ENCODE measurements at regions of chr14 and their contacts with region 1.

Region 1: GRCh38 chr14:89848165-89848564 is 106.4 kb downstream of the EFCAB11 start:
- DNase-seq: peak; percentile 71
- ATAC-seq: 0 out of 2 replicates have a peak, but pooled peaks have one; percentile 3
- H3K4me3 ChIP-seq: no peak overlapping the region
- H3K27ac ChIP-seq: no peak overlapping the region
- H3K4me1 ChIP-seq: peaks cover 16% of the 10 kb centered on the region
- H3K27me3 ChIP-seq: no peaks in the 10 kb centered on the region
- CTCF ChIP-seq: peak; percentile 70
- POLR2A ChIP-seq: no peak
- RAD21 ChIP-seq: peak; percentile 85

Region 2: DNA sequence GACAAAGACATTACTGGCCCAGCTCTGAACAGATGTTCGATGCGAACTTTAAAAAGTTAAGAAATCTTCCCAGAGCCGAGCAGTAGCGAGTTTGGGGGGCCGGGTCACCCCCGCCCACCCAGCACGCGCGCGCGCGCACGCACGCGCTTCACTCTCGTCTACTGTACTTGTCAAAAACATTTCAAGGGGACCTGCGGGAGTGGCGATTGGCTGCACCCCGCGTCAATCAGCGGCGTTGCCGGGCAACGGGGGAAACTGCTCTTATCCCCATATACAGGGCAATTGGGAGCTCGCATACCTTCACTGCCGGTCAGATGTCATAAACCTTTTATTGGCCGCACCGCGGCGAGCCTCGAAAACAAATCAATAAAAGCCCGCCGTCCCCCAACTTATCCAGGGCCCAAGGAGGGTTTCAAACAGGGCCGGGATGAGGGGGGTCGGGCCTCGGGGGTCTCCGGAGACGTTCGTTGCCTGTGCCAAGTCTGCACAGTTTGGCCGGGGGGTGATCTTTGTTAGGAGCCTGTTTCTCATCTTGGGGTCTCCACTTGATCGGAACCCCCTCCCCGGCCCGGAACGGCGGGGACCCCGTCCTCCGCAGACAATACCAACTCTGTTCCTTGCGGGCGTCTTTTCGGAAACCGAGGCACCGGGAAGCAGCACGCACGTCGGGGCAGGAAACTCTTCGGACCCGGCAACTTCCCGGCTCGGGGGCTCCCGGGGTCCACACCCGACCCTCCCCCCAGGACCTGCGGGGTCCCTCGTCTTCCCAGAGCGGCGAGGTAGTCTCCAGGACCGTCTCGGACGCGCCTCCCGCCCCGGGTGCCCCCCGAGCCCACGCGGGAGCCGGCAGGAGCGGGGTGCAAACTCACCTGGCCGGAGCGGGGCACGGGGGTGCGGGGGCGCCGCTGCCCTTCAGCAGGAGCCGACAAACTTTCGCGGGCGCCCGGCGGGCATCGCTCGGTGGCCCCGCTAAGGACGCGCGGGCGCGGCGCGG is 431.9 kb before region 1 on chr14:
- CTCF ChIA-PET with region 1: no interaction called
- POLR2A ChIA-PET with region 1: no interaction called
- dilution Hi-C with region 1: no loop called
- in situ Hi-C with region 1: no loop called
- intact Hi-C with region 1: loop called (anchors 5 kb)
- DNase-seq: peak; percentile 97
- ATAC-seq: peak; percentile 81
- H3K4me3 ChIP-seq: peak overlapping the region; percentile 62
- H3K27ac ChIP-seq: peak overlapping the region; percentile 60
- H3K4me1 ChIP-seq: peaks cover 12% of the 10 kb centered on the region
- H3K27me3 ChIP-seq: no peaks in the 10 kb centered on the region
- CTCF ChIP-seq: no peak
- POLR2A ChIP-seq: peak; percentile 69
- RAD21 ChIP-seq: no peak; the same call in 1 of the 2 replicates

Region 3: DNA sequence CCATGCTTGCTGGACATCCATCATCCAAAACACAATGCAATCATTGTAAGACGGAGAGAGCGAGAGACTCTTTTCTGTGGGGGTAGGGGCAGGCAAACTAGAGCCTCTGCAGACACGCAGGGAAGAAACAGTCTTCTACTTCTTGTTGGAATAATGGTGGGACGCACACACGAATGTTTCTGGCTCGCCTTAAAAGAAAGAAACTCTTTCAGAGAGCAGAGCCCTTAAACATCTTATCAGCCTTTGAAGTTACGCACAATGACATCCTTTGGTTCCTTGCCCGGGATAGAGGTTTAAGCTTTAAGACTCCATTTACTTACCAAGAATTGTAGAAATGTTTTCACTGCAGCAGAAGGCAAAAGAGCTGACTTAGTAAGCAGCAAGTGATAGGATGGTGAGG is 297.3 kb before region 1 on chr14:
- CTCF ChIA-PET with region 1: no interaction called
- POLR2A ChIA-PET with region 1: no interaction called
- dilution Hi-C with region 1: no loop called
- in situ Hi-C with region 1: no loop called
- intact Hi-C with region 1: no loop called
- DNase-seq: no peak
- ATAC-seq: no peak
- H3K4me3 ChIP-seq: no peak overlapping the region
- H3K27ac ChIP-seq: no peak overlapping the region
- H3K4me1 ChIP-seq: peaks cover 2% of the 10 kb centered on the region; the same call in 1 of the 2 replicates
- H3K27me3 ChIP-seq: no peaks in the 10 kb centered on the region
- CTCF ChIP-seq: no peak
- POLR2A ChIP-seq: no peak
- RAD21 ChIP-seq: no peak

Region 4: GRCh38 chr14:89618811-89619551 is 229.2 kb before region 1 on chr14:
- CTCF ChIA-PET with region 1: no interaction called
- POLR2A ChIA-PET with region 1: no interaction called
- dilution Hi-C with region 1: no loop called
- in situ Hi-C with region 1: no loop called
- intact Hi-C with region 1: loop called (anchors 5 kb)
- DNase-seq: peak; percentile 67
- ATAC-seq: peak; percentile 91
- H3K4me3 ChIP-seq: peak overlapping the region; percentile 78
- H3K27ac ChIP-seq: peak overlapping the region; percentile 87
- H3K4me1 ChIP-seq: peaks cover 12% of the 10 kb centered on the region
- H3K27me3 ChIP-seq: no peaks in the 10 kb centered on the region
- CTCF ChIP-seq: peak; percentile 4; the same call in 1 of the 2 replicates
- POLR2A ChIP-seq: peak; percentile 49; the same call in 1 of the 2 replicates
- RAD21 ChIP-seq: peak; percentile 34

Region 5: GRCh38 chr14:89767861-89768268 is 80.3 kb before region 1 on chr14:
- CTCF ChIA-PET with region 1: interaction called, 6 read pairs
- POLR2A ChIA-PET with region 1: no interaction called
- dilution Hi-C with region 1: no loop called
- in situ Hi-C with region 1: no loop called
- intact Hi-C with region 1: loop called (anchors 5 kb)
- DNase-seq: peak; percentile 63
- ATAC-seq: peak; percentile 54
- H3K4me3 ChIP-seq: no peak overlapping the region
- H3K27ac ChIP-seq: no peak overlapping the region
- H3K4me1 ChIP-seq: peaks cover 13% of the 10 kb centered on the region
- H3K27me3 ChIP-seq: no peaks in the 10 kb centered on the region
- CTCF ChIP-seq: peak; percentile 62
- POLR2A ChIP-seq: no peak
- RAD21 ChIP-seq: peak; percentile 88

Region 6: DNA sequence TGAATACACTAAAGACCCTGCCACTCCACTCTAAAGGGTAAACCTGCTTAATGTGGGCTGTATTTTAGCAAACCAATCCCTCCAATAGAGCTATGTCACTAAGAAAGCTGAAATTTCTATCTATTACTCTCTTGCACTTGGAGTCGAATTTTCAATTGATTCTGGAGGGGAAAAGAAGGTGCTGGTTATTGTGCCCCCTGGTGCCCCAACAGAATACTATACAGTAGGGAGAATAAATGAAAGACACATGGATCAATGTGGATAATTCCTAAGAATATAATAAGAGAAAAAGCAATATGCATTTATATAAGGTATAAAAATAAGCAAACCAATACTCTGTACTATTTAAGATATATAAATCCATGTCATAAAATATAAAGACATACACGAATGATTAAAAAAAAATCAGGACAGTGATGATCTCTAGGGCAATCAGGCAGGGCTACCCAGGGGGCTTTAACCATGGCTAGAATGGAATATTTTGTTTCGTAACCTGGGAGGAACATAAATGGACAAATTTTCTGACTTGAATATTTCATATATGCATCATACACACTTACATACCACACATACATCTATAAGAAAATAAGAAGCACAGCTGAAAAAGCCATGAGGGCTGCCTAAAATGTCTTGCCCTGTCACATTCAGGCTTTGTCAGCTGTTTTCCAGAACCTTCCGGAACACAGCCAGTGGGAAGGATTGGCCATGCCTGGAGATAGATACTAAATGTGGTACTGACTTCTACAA is 51.9 kb after region 1 on chr14:
- CTCF ChIA-PET with region 1: no interaction called
- POLR2A ChIA-PET with region 1: no interaction called
- dilution Hi-C with region 1: no loop called
- in situ Hi-C with region 1: no loop called
- intact Hi-C with region 1: loop called (anchors 2 kb)
- DNase-seq: peak; percentile 49
- ATAC-seq: peak; percentile 49
- H3K4me3 ChIP-seq: peak overlapping the region; percentile 11; the same call in 1 of the 2 replicates
- H3K27ac ChIP-seq: peak overlapping the region; percentile 100
- H3K4me1 ChIP-seq: peaks cover 9% of the 10 kb centered on the region
- H3K27me3 ChIP-seq: no peaks in the 10 kb centered on the region
- CTCF ChIP-seq: peak; percentile 56
- POLR2A ChIP-seq: no peak
- RAD21 ChIP-seq: peak; percentile 64

Measured in IMR-90 (cell line).